ENCODE measurements at regions of chr3 and their contacts with region 1.

Region 1: DNA sequence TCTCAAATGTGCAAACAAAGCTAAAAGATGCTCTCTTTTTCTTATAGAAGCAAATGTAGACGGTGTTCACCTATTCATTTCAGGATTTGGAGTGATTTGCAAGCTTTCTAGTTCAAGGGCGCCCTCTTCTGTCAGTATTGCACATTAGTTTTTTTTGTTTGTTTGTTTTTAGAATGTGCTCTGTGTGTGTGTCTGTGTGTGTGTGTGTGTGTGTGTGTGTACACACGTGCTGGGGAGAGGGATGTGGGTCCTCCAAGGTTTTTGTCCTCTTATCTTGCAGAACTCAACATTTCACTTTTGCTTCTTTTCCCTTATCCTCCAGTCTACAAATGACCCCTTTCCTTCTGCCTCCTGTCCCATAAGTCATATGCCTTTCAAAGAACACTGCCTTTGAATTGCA is 23.5 kb downstream of the DNAH1 start:
- DNase-seq: no peak
- H3K4me3 ChIP-seq: no peak overlapping the region
- H3K27ac ChIP-seq: no peak overlapping the region
- H3K4me1 ChIP-seq: no peaks in the 10 kb centered on the region
- H3K27me3 ChIP-seq: no peaks in the 10 kb centered on the region
- CTCF ChIP-seq: peak; percentile 41 to 83 (median 64)
- POLR2A ChIP-seq: no peak

Region 2: DNA sequence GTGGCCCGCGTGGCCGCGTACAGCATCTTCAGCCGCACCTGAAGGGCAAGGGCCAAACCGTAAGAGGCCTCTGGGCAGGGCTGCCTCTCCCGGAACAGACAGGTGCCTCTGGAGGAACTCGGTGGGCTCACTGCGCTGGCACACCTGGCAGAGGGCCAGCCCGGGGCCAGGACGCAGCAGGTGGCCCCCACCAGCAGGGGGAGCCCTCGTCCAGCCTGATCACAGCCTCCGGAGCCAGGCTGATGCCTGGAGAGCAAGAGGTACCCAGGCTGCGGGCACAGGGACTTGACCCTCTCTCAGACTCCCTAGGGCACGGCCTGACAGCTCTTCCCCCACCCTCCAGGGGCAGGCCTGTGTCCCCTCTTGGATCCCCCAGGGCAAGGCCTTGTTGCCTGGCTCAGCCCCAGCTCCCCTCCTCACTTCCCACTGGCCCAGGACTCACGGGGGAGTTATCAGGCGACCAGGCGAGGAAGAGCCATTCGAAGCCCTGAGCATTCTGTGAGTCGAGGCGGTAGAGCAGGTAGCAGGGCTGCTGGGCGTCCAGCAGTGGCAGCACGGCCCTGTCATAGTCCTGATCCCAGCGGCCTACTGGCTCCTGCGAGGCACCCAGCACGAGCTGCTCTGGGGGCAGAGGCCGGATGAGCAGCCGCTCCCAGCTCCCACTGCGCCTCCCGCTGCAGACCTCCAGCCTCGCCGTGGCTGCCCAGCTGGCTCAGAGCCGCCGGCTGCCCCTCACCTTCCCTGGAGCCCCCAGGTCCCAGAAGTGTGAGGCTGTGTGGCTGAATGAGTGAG is 107.9 kb before region 1 on chr3:
- intact Hi-C with region 1: loop called (anchors 5 kb)
- DNase-seq: no peak
- H3K4me3 ChIP-seq: no peak overlapping the region
- H3K27ac ChIP-seq: no peak overlapping the region
- H3K4me1 ChIP-seq: peaks cover 48% of the 10 kb centered on the region
- H3K27me3 ChIP-seq: no peaks in the 10 kb centered on the region
- CTCF ChIP-seq: peak; percentile 41 to 95 (median 74)
- POLR2A ChIP-seq: no peak

Region 3: GRCh38 chr3:52270252-52270754 is 69.3 kb before region 1 on chr3:
- intact Hi-C with region 1: no loop called
- DNase-seq: no peak
- H3K4me3 ChIP-seq: no peak overlapping the region
- H3K27ac ChIP-seq: peak overlapping the region; percentile 47
- H3K4me1 ChIP-seq: peaks cover 82% of the 10 kb centered on the region
- H3K27me3 ChIP-seq: no peaks in the 10 kb centered on the region
- CTCF ChIP-seq: no peak
- POLR2A ChIP-seq: no peak

Region 4: DNA sequence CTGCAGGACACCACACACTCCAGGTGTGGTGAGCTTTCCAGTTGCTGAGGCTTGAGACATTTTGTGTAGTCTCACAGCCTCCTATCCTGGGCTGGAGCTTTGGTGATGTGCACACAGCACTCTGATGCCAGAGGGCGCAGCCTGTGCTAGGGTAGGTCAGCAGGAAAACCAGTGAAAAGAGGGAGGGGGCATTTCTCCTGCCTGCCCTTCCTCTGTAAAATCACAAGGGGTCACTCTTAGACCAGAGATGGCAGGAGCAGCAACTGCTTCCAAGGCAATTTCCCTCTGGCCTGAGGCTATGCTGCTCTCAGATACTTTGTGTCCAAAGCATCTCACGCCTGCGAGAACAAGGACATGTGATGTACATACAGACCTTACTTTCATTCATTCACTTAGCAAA is 511.7 kb after region 1 on chr3:
- intact Hi-C with region 1: no loop called
- DNase-seq: no peak
- H3K4me3 ChIP-seq: no peak overlapping the region
- H3K27ac ChIP-seq: no peak overlapping the region
- H3K4me1 ChIP-seq: peaks cover 2% of the 10 kb centered on the region
- H3K27me3 ChIP-seq: no peaks in the 10 kb centered on the region
- CTCF ChIP-seq: peak in 1 of 3 experiments; percentile 41
- POLR2A ChIP-seq: no peak

Measured in vagina (tissue), 2 donors.